ENCODE measurements at regions of chr11 and their contacts with region 1.

Region 1: GRCh38 chr11:2885676-2886081 is at the start of gene CDKN1C:
- DNase-seq: peak; percentile 86
- H3K4me3 ChIP-seq: peak within 1 kb of the TSS; percentile 44
- H3K27ac ChIP-seq: no peak within 1 kb of the TSS
- H3K4me1 ChIP-seq: peaks cover 3% of the 10 kb centered on the region
- H3K27me3 ChIP-seq: peaks cover 12% of the 10 kb centered on the region
- CTCF ChIP-seq: no peak
- total RNA-seq, gene CDKN1C: 2.9 and 3.5 TPM in 2 replicates

Region 2: DNA sequence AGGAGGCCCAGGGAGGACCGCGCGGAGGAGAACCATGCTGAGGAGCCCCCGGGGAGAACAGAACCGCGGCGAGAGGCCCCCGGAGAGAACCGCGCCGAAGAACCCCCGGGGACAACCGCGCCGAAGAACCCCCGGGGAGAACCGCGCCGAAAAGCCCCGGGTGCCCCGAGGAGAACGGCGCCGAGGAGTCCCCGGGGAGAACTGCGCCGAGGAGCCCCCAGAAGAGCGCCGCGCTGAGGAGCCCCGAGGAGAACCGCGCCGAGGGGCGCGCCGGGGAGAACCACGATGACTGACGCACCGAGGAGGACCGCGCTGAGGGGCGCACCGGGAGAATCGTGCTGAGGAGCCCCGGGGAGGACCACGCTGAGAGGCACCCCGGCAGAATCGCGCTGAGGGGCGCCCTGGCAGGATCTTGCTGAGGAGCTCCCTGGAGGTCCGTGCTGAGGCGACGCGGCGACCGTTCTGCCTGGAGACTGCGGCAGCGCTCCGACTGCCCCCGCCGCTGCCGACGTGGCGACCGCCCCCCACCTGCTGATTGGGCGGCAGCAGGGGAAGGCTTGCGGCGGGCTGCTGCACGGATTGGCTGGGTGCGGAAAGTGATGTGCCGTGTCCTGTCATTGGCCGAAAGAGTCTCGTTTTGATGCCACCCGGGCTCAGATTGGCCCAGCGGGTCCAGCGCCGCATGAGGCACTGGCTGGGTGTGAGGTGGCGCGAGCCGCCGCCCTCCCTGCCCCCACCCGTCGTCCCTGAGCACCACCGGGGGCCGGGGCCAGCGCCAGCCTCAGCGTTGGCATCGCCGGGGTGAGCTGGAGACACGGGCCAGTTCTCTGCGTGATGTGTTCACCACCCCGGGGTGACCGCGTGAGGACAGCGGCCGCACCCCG is 185.9 kb before region 1 on chr11 and contains the start of gene KCNQ1OT1:
- CTCF ChIA-PET with region 1: no interaction called
- POLR2A ChIA-PET with region 1: no interaction called
- intact Hi-C with region 1: loop called (anchors 5 kb)
- DNase-seq: peak; percentile 98
- H3K4me3 ChIP-seq: peak within 1 kb of the TSS; percentile 96
- H3K27ac ChIP-seq: peak within 1 kb of the TSS; percentile 92
- H3K4me1 ChIP-seq: peaks cover 32% of the 10 kb centered on the region
- H3K27me3 ChIP-seq: no peaks in the 10 kb centered on the region
- CTCF ChIP-seq: no peak
- total RNA-seq, gene KCNQ1OT1: 4.0 and 4.1 TPM in 2 replicates

Region 3: GRCh38 chr11:3203221-3204043 is 317.8 kb after region 1 on chr11:
- CTCF ChIA-PET with region 1: no interaction called
- POLR2A ChIA-PET with region 1: no interaction called
- intact Hi-C with region 1: no loop called
- DNase-seq: no peak
- H3K4me3 ChIP-seq: no peak overlapping the region
- H3K27ac ChIP-seq: no peak overlapping the region
- H3K4me1 ChIP-seq: no peaks in the 10 kb centered on the region
- H3K27me3 ChIP-seq: peaks cover 19% of the 10 kb centered on the region
- CTCF ChIP-seq: no peak